MCF 10A (cell line): ENCODE measurements at regions of chr3 and their contacts with region 1.

Region 1: DNA sequence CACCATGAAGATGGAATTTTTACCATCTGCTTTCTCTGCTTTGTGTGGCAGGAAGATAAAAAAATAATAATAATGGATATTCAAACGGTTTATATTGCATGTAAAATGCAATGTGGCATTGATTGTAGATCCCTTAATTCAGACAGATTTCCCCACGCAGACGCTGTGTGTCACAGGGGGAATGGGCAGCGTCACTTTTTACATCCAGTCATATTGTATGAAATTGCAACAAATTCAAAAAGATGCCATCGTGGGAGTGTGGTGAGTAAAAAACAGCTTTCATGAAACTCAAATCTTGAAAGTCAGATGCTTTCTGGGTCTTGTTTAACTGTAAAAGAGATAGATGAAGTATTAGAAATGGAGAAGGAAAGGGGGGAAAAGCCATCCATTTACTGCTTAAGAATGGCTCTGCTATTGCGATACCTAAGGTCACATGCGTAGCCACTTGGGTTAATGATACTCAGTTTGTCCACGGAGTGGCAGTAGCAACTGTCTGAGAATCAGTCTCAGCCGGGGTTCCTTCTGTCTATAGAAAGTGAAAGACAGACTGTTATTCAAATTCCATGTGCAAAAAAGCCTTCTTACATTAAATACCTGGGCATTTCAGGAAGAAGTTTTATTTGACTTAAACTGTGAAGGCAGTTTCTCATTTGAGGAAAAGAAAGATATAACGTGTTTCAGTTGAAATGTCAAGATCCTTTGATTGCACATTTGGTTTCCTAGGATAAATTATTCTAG is 28.5 kb downstream of the BTD start:
- DNase-seq: peak; percentile 90
- H3K4me3 Mint-ChIP-seq: peak overlapping the region; percentile 50
- H3K27ac Mint-ChIP-seq: peak overlapping the region; percentile 67
- H3K4me1 Mint-ChIP-seq: peaks cover 35% of the 10 kb centered on the region
- H3K27me3 Mint-ChIP-seq: no peaks in the 10 kb centered on the region
- CTCF ChIP-seq: peak; percentile 72

Region 2: GRCh38 chr3:15527031-15527459 is 103.0 kb before region 1 on chr3:
- CTCF ChIA-PET with region 1: no interaction called
- POLR2A ChIA-PET with region 1: no interaction called
- intact Hi-C with region 1: no loop called
- DNase-seq: no peak
- H3K4me3 Mint-ChIP-seq: no peak overlapping the region
- H3K27ac Mint-ChIP-seq: no peak overlapping the region
- H3K4me1 Mint-ChIP-seq: no peaks in the 10 kb centered on the region
- H3K27me3 Mint-ChIP-seq: no peaks in the 10 kb centered on the region
- CTCF ChIP-seq: no peak

Region 3: DNA sequence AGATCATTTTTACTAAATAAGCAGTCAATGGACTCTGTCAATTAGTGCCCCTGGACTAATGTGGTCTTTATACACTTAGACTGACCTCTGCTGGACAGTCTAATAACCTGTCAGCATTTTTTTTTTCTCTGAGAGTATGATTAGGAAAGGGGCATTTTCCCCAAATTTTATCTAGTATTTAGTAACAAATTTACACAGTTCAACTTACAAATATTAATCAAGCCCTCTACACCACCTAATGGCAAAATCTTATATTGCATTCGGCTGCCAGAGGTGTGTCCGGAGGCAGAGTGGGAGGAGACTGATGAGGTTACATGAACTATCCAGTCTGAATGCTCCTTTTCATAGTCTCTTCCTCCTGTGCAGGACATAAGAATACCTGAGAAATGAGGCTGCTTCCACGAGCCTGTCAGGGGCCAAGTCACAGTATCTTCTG is 72.5 kb before region 1 on chr3:
- CTCF ChIA-PET with region 1: no interaction called
- POLR2A ChIA-PET with region 1: no interaction called
- intact Hi-C with region 1: no loop called
- DNase-seq: peak; percentile 82
- H3K4me3 Mint-ChIP-seq: no peak overlapping the region
- H3K27ac Mint-ChIP-seq: no peak overlapping the region
- H3K4me1 Mint-ChIP-seq: peaks cover 5% of the 10 kb centered on the region
- H3K27me3 Mint-ChIP-seq: no peaks in the 10 kb centered on the region
- CTCF ChIP-seq: peak; percentile 66

Region 4: DNA sequence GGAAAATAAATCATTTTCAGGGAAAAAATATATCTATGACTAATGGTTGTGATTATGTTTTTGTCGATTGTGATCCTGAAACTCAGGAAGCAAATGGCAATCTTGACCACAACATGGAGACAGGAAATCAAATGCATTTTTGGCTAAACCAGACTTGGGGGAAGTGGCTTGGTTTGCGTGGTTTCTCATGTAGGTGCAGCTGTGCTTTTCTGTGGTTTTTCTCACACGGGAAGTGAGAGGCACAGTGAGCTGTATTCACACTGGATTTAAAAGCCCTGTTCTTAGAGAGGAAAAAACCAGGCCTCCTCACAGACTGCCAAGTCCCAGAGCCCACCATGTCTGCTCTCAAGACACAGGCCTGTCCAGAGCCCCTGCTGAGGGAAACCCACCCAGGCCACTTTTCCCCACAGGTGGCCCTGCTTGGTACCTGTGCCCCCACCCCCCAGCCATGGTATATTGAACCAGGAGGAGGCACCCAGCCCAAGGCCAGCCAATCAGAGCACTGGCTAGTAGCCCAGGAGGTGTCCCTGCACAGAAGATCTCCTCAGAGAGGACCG is 17.7 kb after region 1 on chr3:
- CTCF ChIA-PET with region 1: interaction called, 24 read pairs
- POLR2A ChIA-PET with region 1: interaction called, 51 read pairs
- intact Hi-C with region 1: loop called (anchors 1 kb)
- DNase-seq: peak; percentile 81
- H3K4me3 Mint-ChIP-seq: peak overlapping the region; percentile 64
- H3K27ac Mint-ChIP-seq: peak overlapping the region; percentile 93
- H3K4me1 Mint-ChIP-seq: peaks cover 37% of the 10 kb centered on the region
- H3K27me3 Mint-ChIP-seq: no peaks in the 10 kb centered on the region
- CTCF ChIP-seq: no peak

Region 5: GRCh38 chr3:15682561-15683185 is 52.6 kb after region 1 on chr3:
- CTCF ChIA-PET with region 1: interaction called, 4 read pairs
- POLR2A ChIA-PET with region 1: interaction called, 4 read pairs
- intact Hi-C with region 1: loop called (anchors 2 kb)
- DNase-seq: peak; percentile 40
- H3K4me3 Mint-ChIP-seq: no peak overlapping the region
- H3K27ac Mint-ChIP-seq: peak overlapping the region; percentile 12
- H3K4me1 Mint-ChIP-seq: no peaks in the 10 kb centered on the region
- H3K27me3 Mint-ChIP-seq: no peaks in the 10 kb centered on the region
- CTCF ChIP-seq: no peak

Region 6: GRCh38 chr3:15941958-15942357 is 311.9 kb after region 1 on chr3:
- CTCF ChIA-PET with region 1: no interaction called
- POLR2A ChIA-PET with region 1: no interaction called
- intact Hi-C with region 1: no loop called
- DNase-seq: no peak
- H3K4me3 Mint-ChIP-seq: no peak overlapping the region
- H3K27ac Mint-ChIP-seq: no peak overlapping the region
- H3K4me1 Mint-ChIP-seq: no peaks in the 10 kb centered on the region
- H3K27me3 Mint-ChIP-seq: no peaks in the 10 kb centered on the region
- CTCF ChIP-seq: no peak

Region 7: GRCh38 chr3:16247276-16248061 is 617.4 kb after region 1 on chr3:
- CTCF ChIA-PET with region 1: no interaction called
- POLR2A ChIA-PET with region 1: no interaction called
- intact Hi-C with region 1: loop called (anchors 2 kb)
- DNase-seq: peak; percentile 89
- H3K4me3 Mint-ChIP-seq: no peak overlapping the region
- H3K27ac Mint-ChIP-seq: no peak overlapping the region
- H3K4me1 Mint-ChIP-seq: peaks cover 32% of the 10 kb centered on the region
- H3K27me3 Mint-ChIP-seq: no peaks in the 10 kb centered on the region
- CTCF ChIP-seq: peak; percentile 95